ENCODE measurements at regions of chr3 and their contacts with region 1.

Region 1: DNA sequence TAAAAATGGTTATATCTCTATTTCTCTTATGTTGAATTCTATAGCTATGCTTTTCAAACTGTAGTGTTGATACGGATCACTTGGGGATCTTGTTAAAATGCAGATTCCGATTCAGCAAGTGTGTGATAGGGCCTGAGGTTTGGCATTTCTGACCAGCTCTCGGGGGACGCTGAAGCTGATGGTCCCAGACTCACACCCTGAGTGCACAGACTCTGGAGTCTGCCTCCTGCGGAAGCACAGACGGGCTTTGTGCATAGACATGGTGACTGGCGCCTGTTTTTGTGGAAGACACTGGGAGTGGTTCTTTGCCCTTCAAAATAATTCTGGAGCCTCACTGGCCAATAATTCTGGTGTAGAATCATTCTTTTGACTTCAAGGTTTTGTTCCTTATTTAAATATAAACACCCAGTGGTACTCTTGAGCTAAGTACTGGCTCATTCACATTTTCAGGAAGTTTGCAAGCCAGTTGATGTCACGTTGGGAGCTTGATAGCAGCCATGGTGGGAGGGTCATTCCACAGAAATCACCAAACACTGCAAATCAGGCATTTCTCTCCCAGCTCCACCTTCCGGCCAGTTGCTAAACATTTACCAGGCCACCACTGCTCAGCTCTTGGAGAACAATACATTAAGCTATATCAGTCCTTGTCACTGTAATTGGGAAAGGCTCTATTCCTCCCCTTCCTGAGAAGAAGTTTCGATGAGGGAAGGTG is 19.2 kb downstream of the CLDN11 start:
- DNase-seq: peak; percentile 56
- H3K4me3 Mint-ChIP-seq: no peak overlapping the region
- H3K27ac Mint-ChIP-seq: no peak overlapping the region
- H3K4me1 Mint-ChIP-seq: peaks cover 36% of the 10 kb centered on the region
- H3K27me3 Mint-ChIP-seq: no peaks in the 10 kb centered on the region
- CTCF ChIP-seq: peak; percentile 32

Region 2: DNA sequence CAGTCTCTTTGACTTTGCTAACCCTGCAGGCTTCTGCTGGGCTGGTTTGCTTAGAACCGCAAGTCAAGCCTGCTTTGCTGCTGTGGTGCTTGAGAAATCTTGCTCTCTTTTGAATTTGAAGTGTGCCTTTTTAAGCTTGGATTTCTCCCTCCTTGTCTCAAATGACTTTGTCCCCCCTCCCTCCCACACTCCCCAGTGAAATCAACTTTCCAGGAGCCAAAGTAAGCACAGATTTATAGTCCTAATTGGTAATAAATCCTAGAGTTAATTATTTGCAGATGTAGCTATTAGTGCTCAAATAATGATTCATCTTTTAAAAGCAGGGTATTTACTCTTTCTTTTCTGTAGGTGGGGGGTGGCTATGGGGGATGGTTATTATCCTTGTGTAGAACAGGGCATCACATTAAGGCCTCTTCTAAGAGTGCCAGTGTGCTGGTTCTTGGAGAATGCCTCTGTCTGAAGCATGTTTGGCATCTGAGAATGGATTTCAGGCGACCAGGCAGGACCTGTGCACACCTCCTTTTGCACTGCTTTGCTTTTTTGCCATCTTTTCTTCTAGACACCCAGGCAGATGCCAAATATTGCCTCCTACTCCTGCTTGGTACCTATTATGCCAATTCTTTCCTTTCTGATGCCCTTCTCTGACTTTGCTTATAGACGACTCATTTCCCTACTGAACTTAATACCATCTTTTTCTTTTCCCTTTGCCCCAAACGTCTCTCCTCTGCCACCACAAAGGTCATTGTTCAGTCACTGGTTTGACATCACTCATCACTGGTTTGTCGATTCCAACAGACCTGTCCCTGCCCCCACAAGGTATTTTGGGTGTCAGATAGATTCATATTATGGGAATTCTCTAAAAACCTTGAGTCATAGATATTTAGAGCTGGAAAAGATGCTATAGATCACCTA is 31.6 kb after region 1 on chr3:
- CTCF ChIA-PET with region 1: interaction called, 5 read pairs
- intact Hi-C with region 1: loop called (anchors 1 kb)
- DNase-seq: peak; percentile 40
- H3K4me3 Mint-ChIP-seq: no peak overlapping the region
- H3K27ac Mint-ChIP-seq: no peak overlapping the region
- H3K4me1 Mint-ChIP-seq: peaks cover 41% of the 10 kb centered on the region
- H3K27me3 Mint-ChIP-seq: no peaks in the 10 kb centered on the region
- CTCF ChIP-seq: no peak

Measured in Calu3 (cell line).